CD4-positive, alpha-beta T cell (primary cell): ENCODE measurements at regions of chr2 and their contacts with region 1.

Region 1: GRCh38 chr2:60881047-60881932 is at the start of gene REL:
- DNase-seq: peak; percentile 75 to 98 (median 84)
- ATAC-seq: peak; percentile 83
- H3K4me3 ChIP-seq: peak within 1 kb of the TSS; percentile 94
- H3K4me3 Mint-ChIP-seq: peak within 1 kb of the TSS; percentile 96
- H3K27ac ChIP-seq: peak within 1 kb of the TSS; percentile 100
- H3K27ac Mint-ChIP-seq: peak within 1 kb of the TSS; percentile 98
- H3K4me1 ChIP-seq: peaks cover 5% of the 10 kb centered on the region
- H3K4me1 Mint-ChIP-seq: peaks cover 42% of the 10 kb centered on the region
- H3K27me3 ChIP-seq: no peaks in the 10 kb centered on the region
- H3K27me3 Mint-ChIP-seq: no peaks in the 10 kb centered on the region
- CTCF ChIP-seq: no peak
- total RNA-seq, gene REL: 91.9 to 99.9 TPM

Region 2: GRCh38 chr2:60756191-60757041 is 124.9 kb before region 1 on chr2 and contains the start of gene PAPOLG:
- CTCF ChIA-PET with region 1: no interaction called
- POLR2A ChIA-PET with region 1: interaction called, 27 read pairs
- intact Hi-C with region 1: loop called in 1 of 2 experiments (anchors 2 kb)
- DNase-seq: peak; percentile 93 to 99 (median 96)
- ATAC-seq: peak; percentile 98
- H3K4me3 ChIP-seq: peak within 1 kb of the TSS; percentile 84
- H3K4me3 Mint-ChIP-seq: peak within 1 kb of the TSS; percentile 98
- H3K27ac ChIP-seq: peak within 1 kb of the TSS; percentile 80 to 91
- H3K27ac Mint-ChIP-seq: peak within 1 kb of the TSS; percentile 86
- H3K4me1 ChIP-seq: peaks cover 24% of the 10 kb centered on the region
- H3K4me1 Mint-ChIP-seq: peaks cover 50% of the 10 kb centered on the region
- H3K27me3 ChIP-seq: no peaks in the 10 kb centered on the region
- H3K27me3 Mint-ChIP-seq: no peaks in the 10 kb centered on the region
- CTCF ChIP-seq: no peak
- total RNA-seq, gene PAPOLG: 18.2 to 19.9 TPM

Region 3: GRCh38 chr2:60818272-60818671 is 63.0 kb before region 1 on chr2:
- CTCF ChIA-PET with region 1: interaction called, 4 read pairs
- POLR2A ChIA-PET with region 1: interaction called, 48 read pairs
- intact Hi-C with region 1: loop called (anchors 1 to 2 kb)
- DNase-seq: peak in 5 of 14 experiments; percentile 16 to 65 (median 46)
- ATAC-seq: no peak
- H3K4me3 ChIP-seq: no peak overlapping the region
- H3K4me3 Mint-ChIP-seq: no peak overlapping the region
- H3K27ac ChIP-seq: no peak overlapping the region
- H3K27ac Mint-ChIP-seq: peak overlapping the region; percentile 86
- H3K4me1 ChIP-seq: peaks cover 40% of the 10 kb centered on the region
- H3K4me1 Mint-ChIP-seq: peaks cover 50% of the 10 kb centered on the region
- H3K27me3 ChIP-seq: no peaks in the 10 kb centered on the region
- H3K27me3 Mint-ChIP-seq: no peaks in the 10 kb centered on the region
- CTCF ChIP-seq: no peak

Region 4: GRCh38 chr2:60966507-60967405 is 85.5 kb after region 1 on chr2:
- CTCF ChIA-PET with region 1: no interaction called
- POLR2A ChIA-PET with region 1: interaction called, 18 read pairs
- intact Hi-C with region 1: no loop called
- DNase-seq: peak in 1 of 14 experiments; percentile 40
- ATAC-seq: peak; percentile 62
- H3K4me3 ChIP-seq: no peak overlapping the region
- H3K4me3 Mint-ChIP-seq: peak overlapping the region; percentile 62
- H3K27ac ChIP-seq: no peak overlapping the region
- H3K27ac Mint-ChIP-seq: peak overlapping the region; percentile 38
- H3K4me1 ChIP-seq: peaks cover 4% of the 10 kb centered on the region
- H3K4me1 Mint-ChIP-seq: peaks cover 64% of the 10 kb centered on the region
- H3K27me3 ChIP-seq: no peaks in the 10 kb centered on the region
- H3K27me3 Mint-ChIP-seq: no peaks in the 10 kb centered on the region
- CTCF ChIP-seq: no peak

Region 5: DNA sequence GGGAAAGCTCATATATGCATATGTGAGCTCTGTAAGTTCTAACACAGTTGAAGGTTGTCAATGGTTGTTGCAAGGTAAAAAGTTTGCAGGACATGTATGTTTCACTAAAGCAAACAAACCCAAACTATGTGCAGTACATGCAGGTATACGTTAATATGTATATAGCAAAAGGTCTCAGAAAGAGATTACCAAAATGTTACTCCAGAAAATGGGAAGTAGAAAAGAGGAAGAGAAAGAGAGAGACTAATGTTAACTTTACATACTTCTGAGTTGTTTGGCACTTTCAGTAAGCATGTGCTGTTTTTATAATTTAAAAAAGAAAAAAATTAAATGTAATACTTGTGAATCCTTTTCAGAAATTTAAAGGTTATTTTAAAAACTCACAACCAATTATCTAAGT is 103.4 kb after region 1 on chr2:
- CTCF ChIA-PET with region 1: no interaction called
- POLR2A ChIA-PET with region 1: no interaction called
- intact Hi-C with region 1: no loop called
- DNase-seq: no peak
- ATAC-seq: no peak
- H3K4me3 ChIP-seq: no peak overlapping the region
- H3K4me3 Mint-ChIP-seq: no peak overlapping the region
- H3K27ac ChIP-seq: no peak overlapping the region
- H3K27ac Mint-ChIP-seq: no peak overlapping the region
- H3K4me1 ChIP-seq: no peaks in the 10 kb centered on the region
- H3K4me1 Mint-ChIP-seq: peaks cover 4% of the 10 kb centered on the region
- H3K27me3 ChIP-seq: no peaks in the 10 kb centered on the region
- H3K27me3 Mint-ChIP-seq: no peaks in the 10 kb centered on the region
- CTCF ChIP-seq: no peak

Region 6: DNA sequence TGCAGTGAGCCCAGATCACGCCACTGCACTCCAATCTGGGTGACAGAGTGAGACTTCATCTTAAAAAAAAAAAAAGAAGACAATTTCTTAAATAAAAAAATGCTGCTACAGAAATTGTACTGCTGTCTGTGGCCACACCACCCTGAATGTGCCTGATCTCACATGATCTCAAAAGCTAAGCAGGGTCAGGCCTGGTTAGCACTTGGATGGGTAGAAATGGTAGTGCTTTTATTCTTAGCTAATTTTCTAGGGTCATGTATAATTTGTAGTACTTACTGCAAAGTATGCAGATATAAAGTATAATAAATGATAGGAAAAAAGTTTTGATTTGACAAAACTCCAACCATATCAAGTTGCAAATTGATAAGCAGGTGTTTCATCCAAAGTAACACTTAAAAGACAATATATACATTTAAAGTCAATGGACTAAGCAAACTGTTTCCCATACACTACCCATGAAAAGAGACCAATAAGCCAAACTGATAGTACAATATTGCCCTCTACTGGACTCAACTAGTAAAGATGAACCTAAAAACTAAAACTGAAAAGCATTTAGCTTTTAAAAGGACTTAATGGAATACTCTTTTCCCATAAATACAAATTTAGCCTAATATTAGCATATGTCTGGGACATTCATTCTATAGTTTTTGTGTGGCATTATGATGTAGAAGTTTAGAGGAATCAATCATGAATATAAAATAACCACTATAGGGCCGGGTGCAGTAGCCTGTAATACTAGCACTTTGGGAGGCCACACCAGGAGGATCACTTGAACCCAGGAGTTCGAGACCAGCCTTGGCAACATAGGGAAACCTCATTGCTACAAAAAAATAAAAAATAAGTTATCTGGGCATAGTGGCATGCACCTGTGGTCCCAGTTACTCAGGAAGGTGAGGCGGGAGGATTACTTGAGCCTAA is 117.6 kb after region 1 on chr2:
- CTCF ChIA-PET with region 1: no interaction called
- POLR2A ChIA-PET with region 1: interaction called, 11 read pairs
- intact Hi-C with region 1: loop called in 1 of 2 experiments (anchors 10 kb)
- DNase-seq: peak in 5 of 14 experiments; percentile 9 to 75 (median 71)
- ATAC-seq: peak; percentile 86
- H3K4me3 ChIP-seq: no peak overlapping the region
- H3K4me3 Mint-ChIP-seq: no peak overlapping the region
- H3K27ac ChIP-seq: no peak overlapping the region
- H3K27ac Mint-ChIP-seq: no peak overlapping the region
- H3K4me1 ChIP-seq: no peaks in the 10 kb centered on the region
- H3K4me1 Mint-ChIP-seq: no peaks in the 10 kb centered on the region
- H3K27me3 ChIP-seq: no peaks in the 10 kb centered on the region
- H3K27me3 Mint-ChIP-seq: no peaks in the 10 kb centered on the region
- CTCF ChIP-seq: peak; percentile 94

Region 7: DNA sequence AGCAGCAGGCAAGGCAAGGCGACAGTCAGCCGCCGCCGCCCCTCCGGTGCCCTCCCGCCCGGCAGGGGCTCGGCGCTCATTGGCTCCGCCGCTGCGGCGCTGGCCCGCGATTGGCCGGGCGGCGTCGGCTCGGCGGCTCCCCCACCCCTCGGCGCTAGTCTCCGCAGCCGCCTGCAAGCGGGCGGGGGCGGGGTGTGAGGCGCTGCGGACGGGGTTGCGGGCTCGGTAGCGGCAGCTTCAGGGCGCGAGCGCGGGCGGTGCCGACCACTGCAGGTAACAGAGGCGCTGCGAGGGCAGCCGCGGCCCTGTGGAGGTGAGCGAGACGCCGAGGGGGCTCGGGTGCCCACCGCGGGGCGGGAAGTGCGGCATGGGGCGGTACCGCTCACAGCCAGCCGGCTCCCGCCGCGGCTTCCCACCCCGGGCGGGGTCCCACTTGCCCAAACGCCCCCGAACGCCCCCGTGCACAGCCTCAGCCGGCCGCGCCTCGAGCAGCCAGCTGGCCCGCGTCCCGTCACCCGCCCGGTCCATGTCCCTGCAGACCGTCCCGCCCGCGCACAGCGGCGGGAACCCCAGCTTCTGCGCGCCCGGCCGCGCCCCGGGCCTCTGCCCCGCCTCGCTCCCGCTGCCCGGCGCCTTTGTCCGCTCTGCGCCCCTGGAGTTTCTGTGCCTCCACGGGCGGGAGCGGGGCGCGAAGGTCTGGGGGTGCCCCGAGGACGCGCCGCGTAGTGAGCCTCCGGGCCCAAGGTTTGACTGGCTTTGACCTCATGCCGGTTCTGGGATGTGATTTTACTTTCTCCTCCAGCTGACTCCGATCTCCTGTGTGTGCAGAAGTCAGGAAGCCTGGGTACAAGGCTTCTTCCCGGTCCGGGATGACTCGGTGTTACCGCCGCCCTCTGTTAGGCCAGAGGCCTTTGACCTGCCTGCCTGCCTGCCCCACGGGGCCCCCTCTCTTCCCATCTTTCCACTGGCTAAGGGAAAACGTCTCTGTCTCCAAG is 184.7 kb after region 1 on chr2 and contains the start of gene SANBR:
- CTCF ChIA-PET with region 1: no interaction called
- POLR2A ChIA-PET with region 1: interaction called, 3 read pairs
- intact Hi-C with region 1: loop called in 1 of 2 experiments (anchors 5 kb)
- DNase-seq: peak; percentile 59 to 93 (median 78)
- ATAC-seq: peak; percentile 97
- H3K4me3 ChIP-seq: peak within 1 kb of the TSS; percentile 63
- H3K4me3 Mint-ChIP-seq: peak within 1 kb of the TSS; percentile 99
- H3K27ac ChIP-seq: peak within 1 kb of the TSS in 1 of 2 donors; percentile 30
- H3K27ac Mint-ChIP-seq: peak within 1 kb of the TSS; percentile 68
- H3K4me1 ChIP-seq: peaks cover 11% of the 10 kb centered on the region
- H3K4me1 Mint-ChIP-seq: peaks cover 7% of the 10 kb centered on the region
- H3K27me3 ChIP-seq: no peaks in the 10 kb centered on the region
- H3K27me3 Mint-ChIP-seq: no peaks in the 10 kb centered on the region
- CTCF ChIP-seq: no peak
- total RNA-seq, gene SANBR: 1.1 to 1.3 TPM